ENCODE measurements at regions of chr7 and their contacts with region 1.

Region 1: GRCh38 chr7:108181073-108181985 is 51.2 kb upstream of the LAMB4 start:
- DNase-seq: no peak
- H3K4me3 ChIP-seq: no peak overlapping the region
- H3K27ac ChIP-seq: no peak overlapping the region
- H3K4me1 ChIP-seq: peaks cover 0 to 11% of the 10 kb centered on the region in 2 donors
- H3K27me3 ChIP-seq: no peaks in the 10 kb centered on the region
- CTCF ChIP-seq: peak; percentile 63 to 88 (median 73)
- POLR2A ChIP-seq: no peak

Region 2: DNA sequence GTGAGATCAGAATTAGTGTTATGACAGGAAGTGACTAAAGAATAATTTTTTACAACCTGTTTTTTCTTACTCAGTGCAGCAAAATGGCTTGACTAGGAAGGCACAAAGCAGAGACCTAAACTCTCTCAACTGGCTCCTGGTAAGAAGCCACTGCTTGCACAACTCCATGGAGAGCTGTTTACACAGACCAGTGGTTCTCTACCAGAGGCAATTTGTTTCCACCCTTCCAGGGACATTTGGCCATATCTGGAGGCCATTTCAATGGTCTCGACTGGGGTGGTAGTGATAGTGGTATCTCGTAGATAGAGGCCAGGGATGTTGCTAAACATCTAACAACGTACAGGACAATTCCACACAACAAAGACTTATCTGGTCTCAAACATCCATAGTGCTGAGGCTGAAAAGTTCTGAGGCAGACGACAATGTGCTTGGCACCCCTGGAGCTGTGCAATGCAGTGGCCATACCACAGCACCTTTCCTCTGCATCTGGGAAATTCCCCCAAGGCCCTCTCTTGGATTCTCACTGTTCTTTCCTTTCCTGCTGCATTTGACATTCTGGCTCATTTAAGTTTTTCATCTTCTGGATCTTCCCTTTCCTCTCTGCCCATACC is 54.2 kb after region 1 on chr7:
- intact Hi-C with region 1: loop called in 1 of 2 experiments (anchors 10 kb)
- DNase-seq: peak in 3 of 7 donors; percentile 40 to 52 (median 43)
- H3K4me3 ChIP-seq: no peak overlapping the region
- H3K27ac ChIP-seq: peak overlapping the region in 3 of 5 donors; percentile 3 to 71 (median 29)
- H3K4me1 ChIP-seq: peaks cover 19 to 32% of the 10 kb centered on the region in 2 donors
- H3K27me3 ChIP-seq: no peaks in the 10 kb centered on the region
- CTCF ChIP-seq: no peak
- POLR2A ChIP-seq: no peak

Region 3: GRCh38 chr7:108270385-108271015 is 89.2 kb after region 1 on chr7:
- intact Hi-C with region 1: no loop called
- DNase-seq: no peak
- H3K4me3 ChIP-seq: no peak overlapping the region
- H3K27ac ChIP-seq: no peak overlapping the region
- H3K4me1 ChIP-seq: peaks cover 5 to 7% of the 10 kb centered on the region in 2 donors
- H3K27me3 ChIP-seq: no peaks in the 10 kb centered on the region
- CTCF ChIP-seq: no peak
- POLR2A ChIP-seq: no peak

Region 4: DNA sequence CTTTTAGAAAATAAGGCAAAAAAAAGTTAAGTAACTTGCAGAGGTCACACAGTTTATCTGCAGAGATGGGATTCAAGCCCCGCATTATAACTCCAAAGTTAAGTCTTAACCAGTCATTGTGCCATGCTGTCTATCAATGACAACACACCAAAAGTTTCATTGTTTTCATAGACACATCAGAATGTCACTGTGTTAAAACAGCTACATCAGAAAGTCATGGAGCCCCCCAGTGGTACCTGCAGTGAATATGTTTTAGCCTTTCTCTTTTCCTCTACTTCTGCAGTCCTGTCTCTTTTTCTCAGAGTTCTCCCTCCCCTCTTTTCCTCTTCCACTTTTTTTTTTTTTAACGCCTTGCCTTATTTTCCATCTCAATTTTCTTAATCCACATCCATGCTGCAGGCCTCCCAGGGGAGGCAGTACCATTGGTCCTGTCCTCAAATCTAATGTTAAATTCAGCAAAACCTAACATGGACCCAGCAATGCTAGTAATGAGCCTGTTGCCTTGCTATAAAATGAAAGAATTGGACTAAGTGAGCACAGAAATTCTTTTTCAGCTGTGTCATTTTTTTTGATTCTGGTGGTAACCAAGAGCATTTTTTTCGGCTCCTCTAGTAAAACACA is 278.7 kb after region 1 on chr7:
- intact Hi-C with region 1: loop called in 1 of 2 experiments (anchors 10 kb)
- DNase-seq: peak in 6 of 7 donors; percentile 36 to 70 (median 42)
- H3K4me3 ChIP-seq: no peak overlapping the region
- H3K27ac ChIP-seq: peak overlapping the region in 1 of 5 donors; percentile 23
- H3K4me1 ChIP-seq: peaks cover 0 to 15% of the 10 kb centered on the region in 2 donors
- H3K27me3 ChIP-seq: no peaks in the 10 kb centered on the region
- CTCF ChIP-seq: peak; percentile 36 to 67 (median 58)
- POLR2A ChIP-seq: no peak

Region 5: GRCh38 chr7:108497082-108497725 is 315.9 kb after region 1 on chr7:
- intact Hi-C with region 1: loop called (anchors 5 kb)
- DNase-seq: peak in 6 of 7 donors; percentile 20 to 79 (median 64)
- H3K4me3 ChIP-seq: no peak overlapping the region
- H3K27ac ChIP-seq: no peak overlapping the region
- H3K4me1 ChIP-seq: no peaks in the 10 kb centered on the region
- H3K27me3 ChIP-seq: no peaks in the 10 kb centered on the region
- CTCF ChIP-seq: peak; percentile 72 to 86 (median 82)
- POLR2A ChIP-seq: no peak